Left ventricle myocardium superior (tissue), 1 donor: ENCODE measurements at regions of chr16 and their contacts with region 1.

Region 1: GRCh38 chr16:13919683-13920509 is at the start of gene ERCC4:
- DNase-seq: peak; percentile 100
- ATAC-seq: peak; percentile 98
- total RNA-seq, gene ERCC4: 7.3 TPM

Region 2: DNA sequence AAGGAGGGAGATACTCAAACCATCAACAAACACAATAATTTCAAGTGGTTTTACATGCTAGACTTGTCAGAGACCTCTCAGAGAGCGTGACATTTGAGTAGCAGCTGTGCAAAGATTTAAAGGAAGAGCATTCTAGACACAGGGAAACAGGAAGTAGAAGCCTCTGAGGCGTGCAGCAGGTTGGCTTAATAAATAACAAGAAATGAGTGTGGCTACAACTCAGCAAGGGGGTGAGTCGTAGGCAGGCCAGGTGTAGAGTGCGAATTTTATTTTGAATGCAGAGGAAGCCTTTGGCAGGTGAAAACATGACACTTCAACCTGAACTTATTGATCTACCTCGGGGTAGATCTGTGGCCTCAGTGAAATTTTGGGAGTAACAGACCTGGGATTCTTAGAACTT is 78.0 kb after region 1 on chr16:
- intact Hi-C with region 1: loop called (anchors 10 kb)
- DNase-seq: no peak
- ATAC-seq: no peak

Region 3: GRCh38 chr16:14088155-14088753 is 168.4 kb after region 1 on chr16:
- intact Hi-C with region 1: loop called (anchors 10 kb)
- DNase-seq: peak; percentile 50
- ATAC-seq: peak; percentile 92

Region 4: DNA sequence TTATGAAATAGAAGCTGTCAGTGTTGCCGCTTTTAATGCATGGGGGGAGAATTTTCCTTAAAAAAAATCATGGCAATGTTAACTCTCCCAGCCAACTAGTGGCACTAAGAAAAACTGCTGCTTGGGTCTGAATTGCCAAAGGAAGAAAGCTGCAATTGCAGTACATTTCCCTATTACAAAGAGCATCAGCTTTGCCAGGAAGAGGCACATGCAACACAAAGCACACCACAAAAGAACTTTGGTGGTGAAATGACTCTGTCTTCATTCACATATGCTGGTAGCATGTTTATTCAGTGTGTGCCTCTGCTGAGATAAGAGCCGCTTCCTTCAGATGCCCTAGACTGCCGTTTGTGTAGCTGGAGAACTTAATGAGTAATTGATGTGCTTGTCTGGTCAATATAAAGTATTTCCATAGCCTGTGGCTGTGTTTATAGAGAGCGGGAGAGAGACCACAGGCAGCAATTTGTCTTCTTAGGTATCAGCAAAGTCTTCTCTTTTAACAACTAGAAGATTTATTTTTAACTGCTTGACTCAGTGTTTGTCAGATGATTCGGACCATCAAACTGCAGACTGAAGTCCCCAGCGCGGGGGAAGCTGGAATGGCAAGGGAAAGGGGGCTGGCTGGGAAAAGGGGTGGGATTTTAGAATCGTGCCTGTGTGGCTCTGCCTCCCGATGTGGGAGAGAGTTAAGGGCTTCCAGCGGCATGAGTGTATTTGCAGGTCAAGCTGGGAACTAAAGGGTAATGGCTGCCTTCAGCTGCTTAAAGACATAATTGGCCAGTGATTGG is 266.3 kb after region 1 on chr16:
- intact Hi-C with region 1: no loop called
- DNase-seq: no peak
- ATAC-seq: peak; percentile 74

Region 5: GRCh38 chr16:14249291-14250032 is 329.6 kb after region 1 on chr16:
- intact Hi-C with region 1: loop called (anchors 10 kb)
- DNase-seq: no peak
- ATAC-seq: peak; percentile 23